ENCODE measurements at regions of chr5 and their contacts with region 1.

Region 1: DNA sequence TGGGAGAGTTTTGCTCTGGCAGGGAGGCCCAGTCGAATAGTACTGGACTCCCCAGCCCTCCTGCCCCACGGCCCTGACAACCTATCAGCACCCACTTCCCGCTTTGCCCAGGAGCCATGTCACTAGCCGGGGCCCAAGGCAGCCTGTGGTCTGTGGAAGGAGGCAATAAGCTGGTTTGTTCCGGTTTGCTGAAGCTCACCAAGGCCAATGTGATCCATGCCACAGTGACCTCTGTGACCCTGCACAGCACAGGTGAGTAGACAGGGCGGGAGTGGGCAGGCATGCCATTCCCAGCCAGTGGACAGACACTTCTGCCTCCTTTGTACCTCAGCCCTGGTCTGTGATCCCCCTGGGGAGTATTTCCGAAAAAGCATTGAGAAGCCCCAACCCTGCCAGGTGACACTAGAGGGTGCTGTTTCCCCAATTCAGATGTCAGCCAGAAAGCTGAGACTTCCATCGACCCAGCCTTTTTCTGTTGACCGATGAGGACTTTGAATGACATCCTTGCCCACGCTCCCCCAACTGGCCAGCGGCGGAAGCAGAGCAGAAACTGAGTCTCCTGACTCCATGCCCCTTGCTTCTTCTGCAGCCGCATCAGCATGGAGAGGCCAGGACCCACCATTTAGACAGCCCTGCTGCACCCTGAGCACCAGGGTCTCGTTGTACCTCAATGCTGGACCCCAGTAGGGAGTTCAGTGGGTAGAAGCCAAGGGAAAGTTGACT is 9.6 kb downstream of the PCYOX1L start:
- DNase-seq: peak; percentile 72
- H3K4me3 Mint-ChIP-seq: no peak overlapping the region
- H3K27ac Mint-ChIP-seq: no peak overlapping the region
- H3K4me1 Mint-ChIP-seq: peaks cover 10% of the 10 kb centered on the region
- H3K27me3 Mint-ChIP-seq: no peaks in the 10 kb centered on the region

Region 2: DNA sequence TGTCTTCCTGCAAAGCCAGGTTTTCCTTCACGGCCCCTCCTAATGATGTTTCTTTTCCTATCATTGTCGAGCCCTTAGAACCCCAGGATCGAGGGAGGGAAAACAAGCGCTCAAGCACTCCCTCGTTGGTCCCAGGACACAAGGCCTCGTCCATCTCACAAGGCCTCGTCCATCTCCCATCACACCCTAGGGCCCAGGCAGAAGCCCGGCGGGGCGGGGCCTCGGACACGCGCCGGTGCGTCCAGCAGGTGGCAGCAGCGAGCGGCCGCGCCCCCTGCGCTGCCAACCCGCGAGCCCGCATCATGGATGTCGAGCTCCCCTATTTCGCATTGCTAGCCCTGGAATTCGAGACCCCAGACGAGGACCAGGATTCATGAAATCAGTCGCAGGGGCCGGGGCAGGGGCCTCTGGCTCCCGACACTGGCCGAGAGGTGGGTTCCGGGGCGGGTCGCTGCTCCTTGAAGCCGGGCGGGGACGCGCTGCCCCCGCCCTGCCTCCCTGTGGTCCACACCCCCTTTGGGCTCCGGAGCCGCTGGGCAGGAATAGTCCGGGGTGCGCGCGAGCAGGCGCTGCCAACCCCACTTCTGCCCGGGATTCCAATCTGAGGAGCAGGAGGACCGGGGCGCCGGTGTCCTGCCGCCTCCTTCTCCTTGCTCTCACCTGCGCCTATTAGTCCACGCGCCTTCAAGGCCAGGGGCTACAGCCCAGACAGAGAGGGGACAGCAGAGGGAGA is 226.0 kb before region 1 on chr5 and contains the start of gene ABLIM3:
- CTCF ChIA-PET with region 1: interaction called, 4 read pairs
- intact Hi-C with region 1: loop called (anchors 1 kb)
- DNase-seq: peak; percentile 67
- H3K4me3 Mint-ChIP-seq: peak within 1 kb of the TSS; percentile 45
- H3K27ac Mint-ChIP-seq: no peak within 1 kb of the TSS
- H3K4me1 Mint-ChIP-seq: peaks cover 2% of the 10 kb centered on the region
- H3K27me3 Mint-ChIP-seq: peaks cover 14% of the 10 kb centered on the region
- total RNA-seq, gene ABLIM3: not detected

Region 3: DNA sequence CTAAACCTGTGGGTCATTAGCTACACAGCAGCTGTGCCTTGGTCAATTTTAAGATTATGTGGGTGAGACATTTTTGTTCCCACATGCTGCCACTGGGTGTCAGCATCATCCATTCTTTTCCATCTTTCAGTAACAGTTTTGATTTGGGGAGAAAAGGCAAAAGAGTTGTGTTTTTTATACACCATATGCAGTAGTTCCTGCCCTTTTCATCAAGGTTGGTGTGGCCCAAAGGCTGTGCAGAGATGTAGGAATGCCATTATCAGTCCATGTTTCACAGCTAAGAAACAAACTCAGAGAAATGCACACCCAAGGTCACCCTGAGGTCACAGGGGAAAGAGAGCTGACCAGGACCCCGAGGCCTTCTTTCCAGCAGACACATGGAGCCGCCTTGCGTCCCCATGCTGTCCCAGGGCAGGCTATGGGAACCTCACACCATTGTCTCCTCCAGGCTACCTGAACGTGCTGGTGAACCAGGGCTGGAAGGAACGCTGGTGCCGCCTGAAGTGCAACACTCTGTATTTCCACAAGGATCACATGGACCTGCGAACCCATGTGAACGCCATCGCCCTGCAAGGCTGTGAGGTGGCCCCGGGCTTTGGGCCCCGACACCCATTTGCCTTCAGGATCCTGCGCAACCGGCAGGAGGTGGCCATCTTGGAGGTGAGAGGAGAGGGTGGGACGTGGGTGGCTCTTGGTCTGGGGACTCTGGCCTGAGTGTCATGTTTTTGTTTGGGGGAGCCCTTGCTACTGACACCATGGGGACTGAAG is 49.9 kb before region 1 on chr5:
- CTCF ChIA-PET with region 1: interaction called, 125 read pairs
- intact Hi-C with region 1: loop called (anchors 1 kb)
- DNase-seq: peak; percentile 58
- H3K4me3 Mint-ChIP-seq: no peak overlapping the region
- H3K27ac Mint-ChIP-seq: no peak overlapping the region
- H3K4me1 Mint-ChIP-seq: no peaks in the 10 kb centered on the region
- H3K27me3 Mint-ChIP-seq: no peaks in the 10 kb centered on the region

Region 4: GRCh38 chr5:149406203-149406978 is 39.0 kb after region 1 on chr5:
- CTCF ChIA-PET with region 1: no interaction called
- intact Hi-C with region 1: no loop called
- DNase-seq: no peak
- H3K4me3 Mint-ChIP-seq: no peak overlapping the region
- H3K27ac Mint-ChIP-seq: no peak overlapping the region
- H3K4me1 Mint-ChIP-seq: no peaks in the 10 kb centered on the region
- H3K27me3 Mint-ChIP-seq: no peaks in the 10 kb centered on the region

Region 5: GRCh38 chr5:149442563-149443182 is 75.3 kb after region 1 on chr5:
- CTCF ChIA-PET with region 1: interaction called, 10 read pairs
- intact Hi-C with region 1: no loop called
- DNase-seq: peak; percentile 82
- H3K4me3 Mint-ChIP-seq: no peak overlapping the region
- H3K27ac Mint-ChIP-seq: no peak overlapping the region
- H3K4me1 Mint-ChIP-seq: peaks cover 18% of the 10 kb centered on the region
- H3K27me3 Mint-ChIP-seq: no peaks in the 10 kb centered on the region

Region 6: DNA sequence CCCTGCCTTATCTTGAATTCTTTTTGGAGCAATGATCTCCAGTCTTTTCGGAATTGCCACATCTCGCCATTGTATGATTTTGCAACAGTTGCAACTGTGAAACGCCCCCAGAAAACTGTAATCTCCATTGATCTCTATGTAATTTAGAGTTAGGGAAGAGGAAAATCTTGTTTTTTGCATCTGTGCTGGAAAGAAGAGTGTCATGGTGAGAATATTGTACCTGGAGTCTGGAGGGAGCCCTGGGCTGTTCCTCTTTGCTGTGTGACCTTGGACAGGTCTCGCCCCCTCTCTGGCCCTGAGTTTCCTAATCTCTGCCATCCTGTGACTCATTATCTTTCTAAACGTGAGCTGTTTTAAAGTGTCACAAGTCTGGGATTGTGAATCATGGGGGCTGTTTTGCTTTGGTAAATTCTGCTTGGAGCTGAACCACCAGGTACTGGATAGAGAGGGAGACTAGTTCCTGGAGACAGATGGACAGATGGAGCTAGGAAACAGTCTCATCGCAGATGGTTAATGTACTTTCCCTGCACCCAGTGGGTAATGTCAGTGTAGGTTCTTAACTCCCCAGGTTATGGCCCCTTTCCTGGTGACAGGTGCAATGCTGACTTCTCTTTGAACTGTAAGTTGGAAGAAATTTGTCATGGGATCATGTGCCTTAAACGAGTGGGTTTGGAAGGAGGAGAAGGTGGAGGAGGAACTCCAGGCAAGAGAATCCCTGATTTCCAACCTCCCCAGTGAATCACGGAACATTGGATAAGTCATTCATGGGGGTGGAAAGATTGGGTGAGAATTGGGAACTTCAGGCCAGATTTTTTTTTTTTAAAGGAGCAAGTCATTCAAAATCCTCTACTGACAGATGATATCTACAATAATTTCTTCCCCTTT is 382.3 kb after region 1 on chr5:
- CTCF ChIA-PET with region 1: no interaction called
- intact Hi-C with region 1: no loop called
- DNase-seq: peak; percentile 16
- H3K4me3 Mint-ChIP-seq: no peak overlapping the region
- H3K27ac Mint-ChIP-seq: no peak overlapping the region
- H3K4me1 Mint-ChIP-seq: peaks cover 20% of the 10 kb centered on the region
- H3K27me3 Mint-ChIP-seq: no peaks in the 10 kb centered on the region

Region 7: DNA sequence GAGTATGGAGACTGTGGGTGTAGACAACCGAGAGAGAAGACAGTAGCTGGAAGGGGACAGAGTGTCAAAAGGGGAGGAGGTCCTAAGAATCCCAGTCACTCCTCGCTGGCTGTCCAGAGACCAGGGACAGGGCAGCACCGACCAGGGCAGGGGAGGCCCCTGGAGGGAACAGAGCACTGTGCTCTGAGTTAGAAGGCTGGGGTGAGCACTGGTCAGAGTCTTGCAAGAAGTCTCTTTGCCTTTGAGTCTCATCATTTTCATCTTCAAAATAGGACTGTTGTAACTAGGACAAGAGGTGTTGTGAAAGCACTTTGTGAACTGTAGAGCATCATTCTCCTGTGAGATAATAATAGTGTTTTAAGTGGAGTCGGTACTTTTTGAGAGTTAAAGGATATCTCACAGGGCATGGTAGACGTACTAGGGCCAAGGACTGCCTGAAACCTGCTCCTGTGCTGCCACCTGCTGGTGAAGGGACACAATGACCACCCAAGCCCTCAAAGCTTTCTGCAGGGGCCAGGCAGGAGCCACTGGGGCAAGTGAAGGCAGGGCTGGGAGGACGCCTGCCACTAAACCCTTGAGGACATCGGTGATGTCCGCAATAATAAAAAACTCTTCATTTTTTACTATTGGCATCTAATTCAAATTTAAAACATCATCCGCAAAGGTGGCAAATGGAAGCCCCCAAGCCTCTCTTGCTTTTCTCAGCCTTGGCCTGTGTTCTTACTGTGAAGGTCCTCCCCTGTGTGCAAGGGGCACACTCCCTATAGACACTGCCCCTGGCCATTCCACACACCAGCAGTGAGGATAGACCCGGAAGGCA is 850.7 kb after region 1 on chr5:
- CTCF ChIA-PET with region 1: no interaction called
- intact Hi-C with region 1: no loop called
- DNase-seq: peak; percentile 91
- H3K4me3 Mint-ChIP-seq: no peak overlapping the region
- H3K27ac Mint-ChIP-seq: no peak overlapping the region
- H3K4me1 Mint-ChIP-seq: no peaks in the 10 kb centered on the region
- H3K27me3 Mint-ChIP-seq: peaks cover 4% of the 10 kb centered on the region

Region 8: GRCh38 chr5:150428106-150428876 is 1060.9 kb after region 1 on chr5:
- CTCF ChIA-PET with region 1: no interaction called
- intact Hi-C with region 1: no loop called
- DNase-seq: no peak
- H3K4me3 Mint-ChIP-seq: no peak overlapping the region
- H3K27ac Mint-ChIP-seq: no peak overlapping the region
- H3K4me1 Mint-ChIP-seq: no peaks in the 10 kb centered on the region
- H3K27me3 Mint-ChIP-seq: no peaks in the 10 kb centered on the region